Activated CD8-positive, alpha-beta memory T cell treated with anti-CD3 and anti-CD28 coated beads, Interleukin-2, amount 10 ng/mL, durations not matched to agents 7 days and 5 days (primary cell): ENCODE measurements at regions of chr9 and their contacts with region 1.

Region 1: DNA sequence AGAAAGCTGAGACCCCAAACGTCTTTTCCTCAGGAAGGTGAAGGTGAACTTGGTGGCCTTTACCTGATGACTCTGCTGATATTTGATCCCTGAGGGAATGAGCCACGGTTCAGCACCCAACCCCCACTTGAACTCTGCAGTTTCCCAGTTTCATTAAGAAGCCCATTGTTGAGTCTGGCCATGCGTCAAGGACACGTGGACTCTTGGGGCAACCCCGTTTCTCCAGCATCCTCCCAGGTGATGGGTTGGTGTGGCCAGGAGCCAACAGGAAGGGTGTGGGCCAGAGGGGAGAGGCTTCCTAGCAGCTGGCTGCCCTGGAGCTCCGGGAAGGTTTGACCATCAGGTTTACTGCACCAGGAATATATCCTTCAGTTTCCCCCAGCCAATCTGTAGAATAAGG is 59.5 kb upstream of the GNE start:
- DNase-seq: no peak
- ATAC-seq: no peak
- H3K4me3 Mint-ChIP-seq: no peak overlapping the region
- H3K27ac Mint-ChIP-seq: no peak overlapping the region
- H3K4me1 Mint-ChIP-seq: peaks cover 7% of the 10 kb centered on the region
- H3K27me3 Mint-ChIP-seq: peaks cover 3% of the 10 kb centered on the region

Region 2: DNA sequence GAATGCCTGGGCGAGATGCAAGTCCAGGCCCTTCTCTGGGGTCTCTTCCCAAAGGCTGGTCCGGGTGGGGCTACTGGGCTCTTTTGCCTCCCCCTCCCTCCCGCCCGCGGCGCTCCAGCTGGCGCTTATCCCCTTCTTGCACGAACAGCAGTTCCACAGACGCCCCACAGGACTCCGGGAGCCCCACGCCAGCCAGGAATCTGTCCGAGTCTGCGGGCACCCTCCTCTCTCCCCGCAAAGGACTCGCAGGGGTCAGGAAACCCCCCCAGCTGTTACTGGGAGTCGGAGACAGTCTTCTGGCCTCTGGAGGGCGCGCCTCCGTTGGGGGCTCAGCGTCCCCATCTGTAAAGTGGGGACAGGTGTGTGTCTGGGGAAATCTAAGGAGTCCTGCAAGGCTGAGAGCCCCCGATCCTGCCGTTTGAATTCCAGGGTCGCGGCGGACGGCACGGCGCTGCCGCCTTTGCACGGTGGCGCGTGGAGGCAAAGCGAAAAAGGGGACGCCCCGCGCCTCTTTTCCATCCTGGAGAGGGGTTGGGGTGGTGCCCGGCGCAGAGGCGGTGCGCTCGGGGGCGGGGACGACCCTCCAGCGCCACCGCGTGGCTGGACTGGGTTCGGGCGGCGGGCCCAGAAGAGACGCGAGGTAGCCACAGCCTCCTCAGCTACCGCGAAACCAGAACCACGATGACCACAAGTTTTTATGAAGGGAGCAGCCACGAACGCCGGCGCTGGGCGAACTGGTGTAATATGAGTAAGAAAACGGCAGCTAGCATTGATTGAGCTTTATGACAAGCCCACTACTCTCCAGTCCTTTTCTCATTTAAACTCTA is 151.4 kb before region 1 on chr9:
- CTCF ChIA-PET with region 1: no interaction called
- DNase-seq: peak; percentile 88
- ATAC-seq: peak; percentile 98
- H3K4me3 Mint-ChIP-seq: peak overlapping the region; percentile 64
- H3K27ac Mint-ChIP-seq: peak overlapping the region; percentile 46
- H3K4me1 Mint-ChIP-seq: peaks cover 7% of the 10 kb centered on the region
- H3K27me3 Mint-ChIP-seq: peaks cover 25% of the 10 kb centered on the region

Region 3: GRCh38 chr9:36306471-36307306 is 11.1 kb before region 1 on chr9:
- CTCF ChIA-PET with region 1: interaction called, 10 read pairs
- DNase-seq: peak; percentile 43
- ATAC-seq: peak; percentile 53
- H3K4me3 Mint-ChIP-seq: no peak overlapping the region
- H3K27ac Mint-ChIP-seq: peak overlapping the region; percentile 54
- H3K4me1 Mint-ChIP-seq: peaks cover 14% of the 10 kb centered on the region
- H3K27me3 Mint-ChIP-seq: no peaks in the 10 kb centered on the region